Activated CD4-positive, alpha-beta T cell treated with anti-CD3 and anti-CD28 coated beads for 36 hours (primary cell): ENCODE measurements at regions of chr2 and their contacts with region 1.

Region 1: GRCh38 chr2:170715062-170715931 is at the start of gene SP5:
- DNase-seq: peak; percentile 48
- ATAC-seq: peak; percentile 52
- H3K4me3 Mint-ChIP-seq: peak within 1 kb of the TSS; percentile 70
- H3K27ac Mint-ChIP-seq: no peak within 1 kb of the TSS
- H3K4me1 Mint-ChIP-seq: peaks cover 26% of the 10 kb centered on the region
- H3K27me3 Mint-ChIP-seq: peaks cover 66% of the 10 kb centered on the region
- total RNA-seq, gene SP5: 0.37 TPM in 1 of 2 experiments, not detected in the other

Region 2: GRCh38 chr2:170361090-170361936 is 354.0 kb before region 1 on chr2:
- CTCF ChIA-PET with region 1: interaction called, 7 read pairs
- POLR2A ChIA-PET with region 1: no interaction called
- intact Hi-C with region 1: loop called (anchors 2 to 5 kb)
- DNase-seq: peak; percentile 76
- ATAC-seq: peak; percentile 58
- H3K4me3 Mint-ChIP-seq: no peak overlapping the region
- H3K27ac Mint-ChIP-seq: peak overlapping the region; percentile 90
- H3K4me1 Mint-ChIP-seq: peaks cover 29% of the 10 kb centered on the region
- H3K27me3 Mint-ChIP-seq: peaks cover 7% of the 10 kb centered on the region

Region 3: GRCh38 chr2:170409164-170409535 is 306.1 kb before region 1 on chr2:
- CTCF ChIA-PET with region 1: interaction called, 9 read pairs
- POLR2A ChIA-PET with region 1: no interaction called
- intact Hi-C with region 1: loop called (anchors 5 to 10 kb)
- DNase-seq: peak; percentile 88
- ATAC-seq: peak; percentile 65
- H3K4me3 Mint-ChIP-seq: peak overlapping the region; percentile 11
- H3K27ac Mint-ChIP-seq: no peak overlapping the region
- H3K4me1 Mint-ChIP-seq: peaks cover 5% of the 10 kb centered on the region
- H3K27me3 Mint-ChIP-seq: peaks cover 16% of the 10 kb centered on the region

Region 4: DNA sequence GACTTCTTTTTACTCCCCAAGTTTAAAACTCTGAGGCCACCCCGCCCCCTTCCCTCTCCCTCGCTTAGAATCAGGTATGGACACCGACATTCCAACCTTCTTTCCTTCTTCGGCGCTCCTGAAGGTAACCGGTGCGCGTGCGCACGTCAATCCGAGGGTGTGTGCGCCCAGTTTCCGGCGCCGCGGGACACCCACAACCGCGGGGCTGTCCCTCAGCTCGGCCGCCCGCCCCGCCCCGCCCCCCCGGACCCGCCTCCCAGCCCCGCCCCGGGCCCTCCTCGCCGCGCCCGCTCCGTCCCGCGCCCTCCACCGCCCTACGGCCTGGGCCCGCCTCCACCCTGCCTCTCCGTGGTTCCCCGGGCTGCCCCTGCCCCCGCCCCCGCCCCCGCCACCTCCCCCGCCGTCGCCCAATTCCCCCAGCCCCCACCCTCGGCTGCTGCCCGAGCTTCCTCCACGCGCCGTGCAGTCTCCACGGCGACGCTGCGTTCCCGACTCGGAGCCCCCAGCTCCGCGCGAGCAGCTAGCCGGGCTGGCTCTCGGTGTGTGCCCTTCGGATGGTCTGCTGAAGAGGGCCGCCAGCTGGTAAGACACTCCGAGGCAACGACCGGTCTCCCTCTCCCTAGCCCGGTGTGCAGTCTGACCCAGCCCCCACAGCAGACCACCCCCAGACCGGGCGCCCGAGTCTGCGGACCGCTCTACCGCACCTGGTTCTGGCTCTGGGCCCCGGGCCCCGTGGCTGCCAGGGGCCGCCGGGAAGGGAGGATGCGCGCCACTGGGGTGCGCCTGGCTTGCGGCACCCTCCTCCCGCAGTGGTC is 55.5 kb after region 1 on chr2:
- CTCF ChIA-PET with region 1: interaction called, 3 read pairs
- POLR2A ChIA-PET with region 1: no interaction called
- intact Hi-C with region 1: loop called (anchors 1 to 5 kb)
- DNase-seq: peak; percentile 83
- ATAC-seq: peak; percentile 88
- H3K4me3 Mint-ChIP-seq: peak overlapping the region; percentile 79
- H3K27ac Mint-ChIP-seq: peak overlapping the region; percentile 73
- H3K4me1 Mint-ChIP-seq: peaks cover 13% of the 10 kb centered on the region
- H3K27me3 Mint-ChIP-seq: peaks cover 8% of the 10 kb centered on the region

Region 5: GRCh38 chr2:170822290-170823087 is 107.2 kb after region 1 on chr2:
- CTCF ChIA-PET with region 1: interaction called, 3 read pairs
- POLR2A ChIA-PET with region 1: no interaction called
- intact Hi-C with region 1: loop called in 1 of 2 experiments (anchors 2 kb)
- DNase-seq: peak; percentile 76
- ATAC-seq: peak; percentile 65
- H3K4me3 Mint-ChIP-seq: peak overlapping the region; percentile 60
- H3K27ac Mint-ChIP-seq: no peak overlapping the region
- H3K4me1 Mint-ChIP-seq: peaks cover 38% of the 10 kb centered on the region
- H3K27me3 Mint-ChIP-seq: peaks cover 75% of the 10 kb centered on the region

Region 6: GRCh38 chr2:171629113-171629512 is 913.8 kb after region 1 on chr2:
- CTCF ChIA-PET with region 1: no interaction called
- POLR2A ChIA-PET with region 1: no interaction called
- intact Hi-C with region 1: no loop called
- DNase-seq: no peak
- ATAC-seq: no peak
- H3K4me3 Mint-ChIP-seq: no peak overlapping the region
- H3K27ac Mint-ChIP-seq: no peak overlapping the region
- H3K4me1 Mint-ChIP-seq: no peaks in the 10 kb centered on the region
- H3K27me3 Mint-ChIP-seq: peaks cover 2% of the 10 kb centered on the region

Region 7: GRCh38 chr2:172084734-172085459 is 1369.6 kb after region 1 on chr2:
- CTCF ChIA-PET with region 1: no interaction called
- POLR2A ChIA-PET with region 1: no interaction called
- intact Hi-C with region 1: loop called (anchors 5 to 10 kb)
- DNase-seq: peak; percentile 78
- ATAC-seq: peak; percentile 78
- H3K4me3 Mint-ChIP-seq: peak overlapping the region; percentile 73
- H3K27ac Mint-ChIP-seq: no peak overlapping the region
- H3K4me1 Mint-ChIP-seq: peaks cover 55% of the 10 kb centered on the region
- H3K27me3 Mint-ChIP-seq: peaks cover 82% of the 10 kb centered on the region